HEK293 (cell line): ENCODE measurements at regions of chr2 and their contacts with region 1.

Region 1: DNA sequence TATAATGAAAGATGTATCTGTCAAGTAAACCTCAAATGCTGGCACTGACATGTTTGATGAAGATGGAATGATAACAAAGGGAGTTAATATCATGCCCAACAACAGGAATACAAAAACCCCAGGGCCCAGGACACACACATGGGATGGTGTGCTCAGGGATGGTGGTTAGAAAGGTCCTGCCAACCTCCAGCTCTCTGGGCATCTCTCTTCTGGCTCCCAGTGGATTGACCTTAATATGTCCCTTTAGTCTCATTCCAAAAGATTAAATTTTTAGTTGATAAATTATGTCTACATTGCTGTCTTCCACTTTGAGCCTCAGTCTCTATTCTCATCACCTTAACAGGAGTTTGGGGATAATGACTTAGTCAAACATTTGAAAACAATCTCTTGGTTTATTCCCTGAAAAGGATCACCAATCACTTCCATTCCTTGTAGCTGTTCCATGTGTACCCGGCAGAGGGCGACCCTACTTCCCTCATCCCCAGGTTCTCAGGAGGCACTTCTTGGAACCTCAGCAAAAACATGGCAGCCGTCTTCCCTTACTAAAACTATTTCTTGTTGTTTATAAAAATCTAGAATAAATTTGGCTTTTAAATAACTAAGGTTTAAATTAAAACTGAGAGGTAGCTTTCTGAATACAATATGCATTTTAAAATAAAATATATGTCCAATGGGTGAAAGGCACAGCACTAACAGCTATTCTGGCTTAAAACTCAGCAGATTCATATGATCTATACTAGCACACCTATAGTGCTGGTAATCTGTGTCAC is 29.6 kb downstream of the MCEE start:
- H3K4me3 ChIP-seq: no peak overlapping the region
- H3K27ac ChIP-seq: no peak overlapping the region
- H3K4me1 ChIP-seq: no peaks in the 10 kb centered on the region
- CTCF ChIP-seq: 0 out of 2 replicates have a peak, but pooled peaks have one; percentile 18

Region 2: GRCh38 chr2:71068218-71069035 is 32.0 kb before region 1 on chr2 and contains the start of gene NAGK:
- CTCF ChIA-PET with region 1: interaction called, 12 read pairs
- POLR2A ChIA-PET with region 1: interaction called, 11 read pairs
- H3K4me3 ChIP-seq: peak within 1 kb of the TSS; percentile 65
- H3K27ac ChIP-seq: peak within 1 kb of the TSS; percentile 31
- H3K4me1 ChIP-seq: no peaks in the 10 kb centered on the region; the same call in 1 of the 2 replicates
- CTCF ChIP-seq: peak; percentile 72

Region 3: DNA sequence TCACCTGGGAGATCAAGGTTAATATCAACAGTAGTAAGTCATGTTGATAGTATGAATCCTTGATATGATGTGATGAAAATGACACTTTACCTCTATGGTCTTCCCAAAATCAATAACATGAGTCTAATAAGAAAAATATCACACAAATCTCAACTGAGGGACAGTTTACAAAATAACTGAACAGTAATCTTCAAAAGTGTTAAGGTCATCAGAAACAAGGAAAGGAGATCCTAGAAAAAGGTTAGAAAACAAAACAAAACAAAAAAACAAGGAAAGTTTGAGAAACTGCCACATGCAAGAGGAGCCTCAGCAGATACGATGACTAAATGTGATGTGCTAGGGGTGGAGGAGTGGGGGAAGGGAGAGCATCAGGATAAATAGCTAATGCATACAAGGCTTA is 13.5 kb after region 1 on chr2:
- CTCF ChIA-PET with region 1: interaction called, 29 read pairs
- POLR2A ChIA-PET with region 1: no interaction called
- H3K4me3 ChIP-seq: no peak overlapping the region
- H3K27ac ChIP-seq: no peak overlapping the region
- H3K4me1 ChIP-seq: no peaks in the 10 kb centered on the region
- CTCF ChIP-seq: no peak

Region 4: DNA sequence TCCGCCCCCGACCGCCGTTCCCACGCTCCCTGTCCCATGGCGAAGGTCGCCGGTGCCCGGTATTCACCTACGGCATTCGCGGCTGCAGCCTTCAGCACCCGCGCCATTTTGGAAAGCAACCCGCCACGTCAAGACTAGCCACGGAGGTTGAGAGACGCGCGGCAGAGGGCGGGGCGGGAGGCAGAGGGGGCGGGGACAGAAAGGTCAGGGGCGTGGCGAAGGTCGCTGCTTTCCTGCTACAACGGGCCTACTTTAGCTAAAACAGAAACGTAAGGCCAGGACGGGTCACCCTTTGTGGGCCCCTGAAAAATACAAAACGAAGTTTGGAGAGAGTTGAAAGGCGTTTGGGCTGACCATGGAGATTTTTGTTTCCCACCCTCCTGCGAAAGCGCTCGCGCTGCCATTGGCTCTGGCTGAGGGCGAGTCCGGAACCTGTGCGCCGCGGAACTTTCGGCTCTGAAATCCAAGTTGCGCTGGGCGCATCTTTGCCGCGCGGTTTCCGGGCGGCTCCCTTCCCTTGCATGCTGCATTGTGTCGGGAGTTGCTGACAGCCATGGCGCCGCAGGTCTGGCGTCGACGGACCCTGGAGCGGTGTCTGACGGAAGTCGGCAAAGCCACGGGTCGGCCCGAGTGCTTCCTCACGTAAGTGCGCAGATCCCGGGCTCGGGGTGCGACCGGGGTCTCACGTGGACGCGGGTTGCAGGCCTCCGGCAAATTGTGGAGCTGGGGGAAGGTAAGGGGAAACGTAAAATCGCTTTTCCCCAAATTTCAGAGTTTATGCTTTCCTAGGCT is 29.9 kb after region 1 on chr2 and contains the starts of genes MCEE and MPHOSPH10:
- CTCF ChIA-PET with region 1: interaction called, 14 read pairs
- POLR2A ChIA-PET with region 1: interaction called, 7 read pairs
- H3K4me3 ChIP-seq: peak within 1 kb of the TSS; percentile 90
- H3K27ac ChIP-seq: peak within 1 kb of the TSS; percentile 79
- H3K4me1 ChIP-seq: 0 out of 2 replicates have a peak, but pooled peaks cover 3% of the 10 kb centered on the region
- CTCF ChIP-seq: no peak

Region 5: DNA sequence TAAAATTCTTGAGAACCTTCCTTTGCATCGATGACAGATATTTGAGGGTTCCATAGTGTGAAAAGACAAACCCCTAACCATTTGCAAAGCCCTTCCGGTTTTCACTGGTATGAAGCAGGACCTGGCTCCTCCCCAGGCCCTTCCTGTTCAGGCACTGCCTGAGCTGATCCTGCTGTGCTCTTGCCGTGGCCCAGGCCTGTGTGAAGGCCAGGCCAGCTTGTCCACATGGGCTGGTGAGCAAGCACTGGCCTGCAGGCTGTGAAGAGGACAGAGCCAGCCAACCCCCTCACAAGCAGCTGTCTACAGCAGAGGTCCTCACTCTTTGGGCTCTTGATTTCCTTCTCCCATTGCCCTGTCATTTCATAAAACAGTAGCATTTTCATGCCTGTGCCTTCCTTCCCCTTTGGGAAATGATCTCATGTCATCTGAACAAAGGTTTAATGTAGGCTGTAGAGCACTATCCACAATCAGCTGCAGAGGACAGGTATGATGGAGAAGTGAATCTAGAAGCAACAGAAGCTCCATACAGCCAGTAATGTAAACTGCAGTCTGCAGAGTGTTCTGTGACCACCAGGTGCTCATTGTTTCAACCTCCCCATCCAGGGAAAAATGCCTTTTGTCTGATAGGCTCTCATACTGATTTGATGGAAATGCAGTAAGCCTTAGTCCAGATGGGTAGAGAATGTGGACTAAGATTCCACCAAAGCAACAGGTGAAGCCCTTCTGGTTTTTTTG is 49.9 kb after region 1 on chr2:
- CTCF ChIA-PET with region 1: interaction called, 16 read pairs
- POLR2A ChIA-PET with region 1: no interaction called
- H3K4me3 ChIP-seq: no peak overlapping the region
- H3K27ac ChIP-seq: no peak overlapping the region
- H3K4me1 ChIP-seq: no peaks in the 10 kb centered on the region
- CTCF ChIP-seq: no peak

Region 6: GRCh38 chr2:71157124-71157793 is 56.9 kb after region 1 on chr2:
- CTCF ChIA-PET with region 1: interaction called, 16 read pairs
- POLR2A ChIA-PET with region 1: no interaction called
- H3K4me3 ChIP-seq: no peak overlapping the region
- H3K27ac ChIP-seq: no peak overlapping the region
- H3K4me1 ChIP-seq: peaks cover 4% of the 10 kb centered on the region; the same call in 1 of the 2 replicates
- CTCF ChIP-seq: peak; percentile 75

Region 7: DNA sequence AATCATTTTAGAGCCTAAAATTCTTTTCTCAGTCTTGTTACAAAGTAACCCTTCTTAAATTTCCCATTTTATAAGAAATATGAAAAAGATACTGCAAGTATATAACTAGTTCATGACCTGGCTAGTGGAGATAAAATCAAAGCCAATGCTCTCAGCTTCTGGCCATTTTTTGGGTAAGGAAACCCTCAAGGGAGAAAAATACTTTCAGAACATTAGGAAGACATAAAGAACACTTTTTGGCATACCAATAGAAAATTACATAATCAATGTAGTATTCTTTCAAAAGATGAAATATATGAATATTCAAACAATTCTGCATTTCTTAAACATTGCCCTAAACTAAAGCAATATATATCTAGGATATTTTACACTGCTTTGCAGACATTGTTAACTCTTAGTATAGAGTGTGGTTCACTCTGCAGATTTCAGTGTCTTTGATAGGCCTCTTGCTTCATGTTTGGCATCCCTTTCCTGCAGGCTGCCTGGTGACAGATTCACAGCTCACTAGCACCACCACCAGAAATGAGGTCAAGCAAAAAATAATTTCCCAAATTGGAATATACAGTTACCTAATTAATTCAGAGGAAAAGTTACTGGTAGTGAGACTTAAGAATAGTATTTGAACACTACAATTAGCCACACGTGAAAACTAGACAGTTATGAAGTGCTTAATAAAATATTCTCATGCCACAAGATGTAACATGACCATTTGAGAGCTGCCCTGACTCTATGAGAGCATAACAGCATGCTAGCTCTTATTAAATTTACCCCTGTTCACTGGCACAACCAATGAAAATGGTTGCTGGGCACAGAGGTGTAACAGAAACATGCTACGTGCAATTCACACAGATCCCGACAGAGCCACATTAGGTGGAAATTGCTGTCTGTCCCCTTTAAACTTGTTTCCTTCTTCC is 90.5 kb after region 1 on chr2:
- CTCF ChIA-PET with region 1: interaction called, 12 read pairs
- POLR2A ChIA-PET with region 1: no interaction called
- H3K4me3 ChIP-seq: no peak overlapping the region
- H3K27ac ChIP-seq: no peak overlapping the region
- H3K4me1 ChIP-seq: no peaks in the 10 kb centered on the region
- CTCF ChIP-seq: 0 out of 2 replicates have a peak, but pooled peaks have one; percentile 19

Region 8: DNA sequence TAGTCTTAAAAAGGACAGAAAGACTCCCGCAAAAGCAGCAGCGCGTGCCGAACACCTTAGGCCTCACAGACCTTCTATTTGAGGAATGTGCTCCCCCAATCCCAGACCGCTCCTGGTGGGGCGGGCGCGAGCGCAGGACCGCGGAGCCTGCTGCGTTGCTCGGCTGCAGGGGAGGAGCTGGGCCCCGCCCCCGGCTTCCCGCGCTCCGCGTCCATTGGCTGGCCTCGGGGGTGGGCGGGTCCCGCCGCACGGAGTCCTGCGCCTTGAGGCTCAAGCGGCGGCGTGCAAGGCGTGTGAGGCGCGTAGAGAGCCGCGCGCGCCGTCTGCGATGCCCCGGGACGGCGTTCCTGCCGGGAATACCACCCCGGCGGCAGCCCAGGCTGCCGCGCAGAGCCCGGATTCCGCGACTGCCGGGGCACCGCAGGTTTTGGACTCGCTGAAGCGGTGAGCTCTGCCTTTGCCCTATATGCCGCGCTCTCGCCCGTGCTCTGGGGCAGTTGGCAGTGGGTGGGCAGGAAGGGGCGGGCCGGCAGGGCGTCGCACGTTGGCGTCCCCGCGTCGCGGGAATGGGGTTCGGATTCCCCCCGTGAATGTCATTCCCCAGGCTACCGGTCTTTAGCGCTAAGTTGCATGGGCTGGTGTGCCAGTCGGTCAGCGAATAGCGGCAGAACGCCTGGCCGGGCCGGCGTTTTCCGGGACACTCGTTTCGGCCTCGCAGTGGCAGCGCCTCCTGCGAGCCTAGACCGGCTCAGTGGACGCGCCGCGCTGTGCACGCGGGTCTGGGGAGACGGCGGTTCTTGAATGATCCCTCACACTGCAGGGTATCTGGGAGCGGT is 176.1 kb after region 1 on chr2:
- CTCF ChIA-PET with region 1: no interaction called
- POLR2A ChIA-PET with region 1: no interaction called
- H3K4me3 ChIP-seq: peak overlapping the region; percentile 72
- H3K27ac ChIP-seq: peak overlapping the region; percentile 54; the same call in 1 of the 2 replicates
- H3K4me1 ChIP-seq: peaks cover 10% of the 10 kb centered on the region
- CTCF ChIP-seq: peak; percentile 55